Right cardiac atrium (tissue), 5 donors: ENCODE measurements at regions of chr6 and their contacts with region 1.

Region 1: DNA sequence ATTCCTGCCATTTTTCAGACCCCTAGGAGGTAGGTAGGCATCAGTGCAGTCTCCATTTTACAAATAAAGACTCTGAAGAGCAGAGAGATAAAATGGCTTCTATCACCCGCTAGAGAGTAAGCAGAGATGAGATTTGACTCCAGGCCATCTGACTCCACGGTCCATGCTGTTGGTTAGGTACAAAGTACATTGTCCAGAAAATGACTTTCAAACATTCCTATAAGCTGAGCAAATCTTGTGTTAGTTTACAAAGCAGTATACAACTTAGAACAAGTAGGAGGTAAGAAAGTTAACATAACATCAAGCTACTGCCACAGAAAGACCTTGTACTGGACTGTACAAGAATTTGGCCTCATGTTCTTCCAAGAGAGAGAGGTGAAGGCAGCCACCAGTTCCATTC is 14.9 kb downstream of the BTN1A1 start:
- DNase-seq: no peak
- ATAC-seq: no peak
- H3K4me3 ChIP-seq: no peak overlapping the region
- H3K27ac ChIP-seq: no peak overlapping the region
- H3K4me1 ChIP-seq: no peaks in the 10 kb centered on the region
- H3K27me3 ChIP-seq: no peaks in the 10 kb centered on the region

Region 2: DNA sequence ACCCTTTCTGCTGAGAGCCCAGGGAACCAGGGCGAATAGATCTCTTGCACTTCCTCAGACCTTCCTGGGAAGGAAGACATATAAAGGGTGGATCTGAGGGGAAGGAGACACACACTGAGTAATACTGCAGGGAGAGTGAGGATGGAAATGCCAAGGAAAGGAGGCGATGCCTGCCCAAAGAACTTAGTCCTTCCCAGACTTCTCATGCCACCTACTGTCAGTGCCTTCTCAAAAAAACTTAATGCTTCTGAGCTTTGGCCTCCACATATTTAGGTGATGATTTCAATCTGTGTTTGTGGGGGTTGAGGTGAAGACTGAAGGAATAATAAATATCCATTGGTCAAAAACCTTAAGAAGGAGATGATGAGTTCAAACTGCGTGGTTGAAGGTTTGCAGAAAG is 103.2 kb before region 1 on chr6:
- intact Hi-C with region 1: loop called in 1 of 4 experiments (anchors 10 kb)
- DNase-seq: no peak
- ATAC-seq: peak in 1 of 2 donors; percentile 40
- H3K4me3 ChIP-seq: no peak overlapping the region
- H3K27ac ChIP-seq: no peak overlapping the region
- H3K4me1 ChIP-seq: no peaks in the 10 kb centered on the region
- H3K27me3 ChIP-seq: no peaks in the 10 kb centered on the region

Region 3: DNA sequence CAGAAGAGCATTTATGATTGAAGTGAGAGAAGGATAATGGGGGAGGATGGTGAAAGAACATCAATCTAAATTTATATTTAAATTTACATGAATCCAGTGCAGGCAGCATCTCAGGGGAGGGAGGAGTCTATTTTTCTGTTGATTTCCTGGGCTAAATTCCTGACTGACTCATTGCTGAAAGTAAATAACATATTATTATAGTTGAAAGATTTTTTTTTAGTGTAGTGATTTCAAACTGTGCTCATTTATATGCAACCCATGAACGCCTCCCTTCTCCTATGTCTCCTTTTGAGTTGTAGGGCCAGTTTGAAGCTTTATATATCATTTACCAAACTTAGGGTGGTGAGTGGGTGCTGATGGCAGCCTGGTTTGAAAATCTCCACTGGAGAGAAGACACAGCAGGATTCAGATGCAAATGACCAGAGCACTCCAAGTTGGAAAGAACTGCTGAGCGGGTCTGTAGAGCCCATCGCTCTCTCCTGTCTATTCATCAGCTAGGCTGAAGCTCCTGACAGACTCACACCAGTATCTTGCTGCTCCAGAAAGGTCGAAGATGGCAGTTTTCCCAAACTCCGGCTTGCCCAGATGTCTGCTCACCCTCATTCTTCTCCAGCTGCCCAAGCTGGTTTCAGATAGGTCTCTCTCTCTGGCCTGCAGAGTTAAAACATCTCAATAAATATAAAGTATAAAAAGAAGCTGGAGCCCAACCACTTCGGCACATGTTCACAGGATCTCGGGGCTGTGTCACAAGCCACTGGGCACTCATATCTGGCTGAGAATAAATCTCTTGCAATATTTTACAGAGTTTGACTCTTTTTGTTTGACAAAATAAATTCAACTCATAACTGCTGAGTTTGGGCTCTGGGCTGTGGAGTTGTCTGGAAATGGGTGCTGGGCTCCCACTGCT is 38.9 kb before region 1 on chr6:
- intact Hi-C with region 1: loop called in 1 of 4 experiments (anchors 5 kb)
- DNase-seq: no peak
- ATAC-seq: no peak
- H3K4me3 ChIP-seq: no peak overlapping the region
- H3K27ac ChIP-seq: no peak overlapping the region
- H3K4me1 ChIP-seq: no peaks in the 10 kb centered on the region
- H3K27me3 ChIP-seq: no peaks in the 10 kb centered on the region